ENCODE measurements at regions of chr17 and their contacts with region 1.

Region 1: DNA sequence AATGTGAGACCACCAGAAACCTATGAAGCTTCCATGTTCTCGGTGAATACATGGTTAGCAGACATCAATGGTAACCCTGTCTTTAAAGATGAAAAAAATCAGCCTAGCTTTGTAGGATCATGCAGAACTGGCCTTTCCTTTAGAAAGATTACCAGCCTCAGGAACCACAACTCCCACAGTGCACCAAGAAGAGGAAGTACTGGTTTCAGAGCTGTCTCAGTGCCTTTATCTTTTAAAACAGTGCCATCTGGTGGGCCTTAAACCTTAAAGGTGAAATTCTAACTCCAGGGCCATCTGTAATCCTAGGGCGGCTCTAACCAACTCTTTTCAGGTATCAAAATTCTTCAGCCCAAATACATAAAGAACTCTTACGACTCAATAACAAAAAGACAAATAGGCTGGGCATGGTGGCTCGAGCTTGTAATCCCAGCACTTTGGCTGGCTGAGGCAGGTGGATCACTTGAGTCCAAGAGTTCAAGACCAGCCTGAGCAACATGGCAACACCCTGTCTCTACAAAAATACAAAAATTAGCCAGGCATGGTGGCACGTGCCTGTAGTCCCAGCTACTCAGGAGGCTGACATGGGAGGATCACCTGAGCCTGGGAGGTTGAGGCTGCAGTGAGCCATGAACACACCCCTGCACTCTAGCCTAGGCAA is 5.4 kb downstream of the ATPAF2 start:
- DNase-seq: peak; percentile 47 to 80 (median 60)
- ATAC-seq: peak; percentile 94
- H3K4me3 ChIP-seq: no peak overlapping the region
- H3K27ac ChIP-seq: no peak overlapping the region
- H3K4me1 ChIP-seq: peaks cover 8 to 21% of the 10 kb centered on the region in 2 experiments; a peak in 3 of 5 replicates
- H3K27me3 ChIP-seq: no peaks in the 10 kb centered on the region
- CTCF ChIP-seq: peak; percentile 57 to 82 (median 65)
- EP300 ChIP-seq: no peak
- POLR2A ChIP-seq: no peak
- RAD21 ChIP-seq: peak; percentile 84 to 85

Region 2: GRCh38 chr17:17890773-17891759 is 142.5 kb before region 1 on chr17:
- CTCF ChIA-PET with region 1: interaction called, 9 read pairs
- POLR2A ChIA-PET with region 1: no interaction called
- in situ Hi-C with region 1: no loop called
- intact Hi-C with region 1: loop called (anchors 1 kb)
- DNase-seq: peak; percentile 66 to 77 (median 72)
- ATAC-seq: peak; percentile 99
- H3K4me3 ChIP-seq: no peak overlapping the region
- H3K27ac ChIP-seq: no peak overlapping the region
- H3K4me1 ChIP-seq: peaks cover 0 to 7% of the 10 kb centered on the region in 2 experiments; a peak in 2 of 5 replicates
- H3K27me3 ChIP-seq: no peaks in the 10 kb centered on the region
- CTCF ChIP-seq: peak; percentile 79 to 87 (median 87)
- EP300 ChIP-seq: no peak
- POLR2A ChIP-seq: no peak
- RAD21 ChIP-seq: peak; percentile 84 to 94

Region 3: GRCh38 chr17:17985555-17985954 is 48.0 kb before region 1 on chr17:
- CTCF ChIA-PET with region 1: interaction called, 3 read pairs
- POLR2A ChIA-PET with region 1: no interaction called
- in situ Hi-C with region 1: no loop called
- intact Hi-C with region 1: loop called (anchors 5 kb)
- DNase-seq: peak in 1 of 4 experiments; percentile 21
- ATAC-seq: peak; percentile 70; the same call in 2 of the 3 replicates
- H3K4me3 ChIP-seq: no peak overlapping the region
- H3K27ac ChIP-seq: no peak overlapping the region
- H3K4me1 ChIP-seq: no peaks in the 10 kb centered on the region; a peak in 2 of 5 replicates
- H3K27me3 ChIP-seq: peaks cover 0 to 33% of the 10 kb centered on the region in 2 experiments; a peak in 2 of 5 replicates
- CTCF ChIP-seq: peak; percentile 26 to 45 (median 45); a peak in 4 of 6 replicates
- EP300 ChIP-seq: no peak
- POLR2A ChIP-seq: no peak
- RAD21 ChIP-seq: peak; percentile 12 to 45; a peak in 2 of 4 replicates

Region 4: GRCh38 chr17:18045691-18046090 is 12.1 kb after region 1 on chr17:
- CTCF ChIA-PET with region 1: no interaction called
- POLR2A ChIA-PET with region 1: no interaction called
- in situ Hi-C with region 1: no loop called
- intact Hi-C with region 1: no loop called
- DNase-seq: no peak
- ATAC-seq: no peak
- H3K4me3 ChIP-seq: no peak overlapping the region
- H3K27ac ChIP-seq: no peak overlapping the region
- H3K4me1 ChIP-seq: peaks cover under 1 to 19% of the 10 kb centered on the region in 2 experiments; a peak in 2 of 5 replicates
- H3K27me3 ChIP-seq: no peaks in the 10 kb centered on the region
- CTCF ChIP-seq: no peak
- EP300 ChIP-seq: no peak
- POLR2A ChIP-seq: no peak
- RAD21 ChIP-seq: no peak

Region 5: DNA sequence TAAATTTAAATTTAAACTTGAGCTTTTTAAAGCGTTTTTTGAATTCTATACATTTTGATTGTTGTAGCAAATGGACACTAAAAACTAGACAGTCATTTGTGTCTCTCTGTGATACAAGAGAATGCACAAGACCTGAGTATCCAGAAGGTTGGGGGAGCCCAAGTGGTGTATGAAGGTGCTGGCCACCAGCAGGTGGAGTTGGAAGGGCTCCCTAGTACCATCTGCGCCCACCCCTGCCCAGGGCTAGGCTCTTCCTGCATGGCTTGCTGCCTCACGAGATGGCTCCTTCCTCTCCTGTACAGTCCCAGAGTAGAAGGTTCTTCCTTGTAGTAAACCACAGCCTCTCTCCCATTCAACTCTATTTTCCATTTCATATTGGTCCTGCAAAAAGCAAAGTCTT is 22.6 kb after region 1 on chr17:
- CTCF ChIA-PET with region 1: no interaction called
- POLR2A ChIA-PET with region 1: no interaction called
- in situ Hi-C with region 1: no loop called
- intact Hi-C with region 1: no loop called
- DNase-seq: no peak
- ATAC-seq: no peak
- H3K4me3 ChIP-seq: no peak overlapping the region
- H3K27ac ChIP-seq: no peak overlapping the region
- H3K4me1 ChIP-seq: no peaks in the 10 kb centered on the region
- H3K27me3 ChIP-seq: no peaks in the 10 kb centered on the region
- CTCF ChIP-seq: no peak
- EP300 ChIP-seq: no peak
- POLR2A ChIP-seq: no peak
- RAD21 ChIP-seq: no peak